HepG2 (cell line): ENCODE measurements at regions of chr18 and their contacts with region 1.

Region 1: GRCh38 chr18:70221156-70221914 is 15.8 kb upstream of the RTTN start:
- DNase-seq: no peak
- ATAC-seq: peak; percentile 65
- H3K4me3 ChIP-seq: no peak overlapping the region
- H3K27ac ChIP-seq: no peak overlapping the region
- H3K4me1 ChIP-seq: peaks cover 15% of the 10 kb centered on the region
- H3K27me3 ChIP-seq: peaks cover 0 to 29% of the 10 kb centered on the region in 2 experiments; a peak in 3 of 5 replicates
- CTCF ChIP-seq: no peak
- EP300 ChIP-seq: no peak
- POLR2A ChIP-seq: no peak
- RAD21 ChIP-seq: no peak

Region 2: GRCh38 chr18:70116949-70117348 is 104.4 kb before region 1 on chr18:
- CTCF ChIA-PET with region 1: no interaction called
- POLR2A ChIA-PET with region 1: no interaction called
- in situ Hi-C with region 1: no loop called
- intact Hi-C with region 1: no loop called
- DNase-seq: no peak
- ATAC-seq: no peak
- H3K4me3 ChIP-seq: no peak overlapping the region
- H3K27ac ChIP-seq: no peak overlapping the region
- H3K4me1 ChIP-seq: no peaks in the 10 kb centered on the region
- H3K27me3 ChIP-seq: no peaks in the 10 kb centered on the region
- CTCF ChIP-seq: no peak
- EP300 ChIP-seq: no peak
- POLR2A ChIP-seq: no peak
- RAD21 ChIP-seq: no peak

Region 3: GRCh38 chr18:70249118-70249517 is 27.8 kb after region 1 on chr18:
- CTCF ChIA-PET with region 1: no interaction called
- POLR2A ChIA-PET with region 1: no interaction called
- in situ Hi-C with region 1: no loop called
- intact Hi-C with region 1: loop called (anchors 1 kb)
- DNase-seq: no peak
- ATAC-seq: no peak
- H3K4me3 ChIP-seq: no peak overlapping the region
- H3K27ac ChIP-seq: no peak overlapping the region
- H3K4me1 ChIP-seq: no peaks in the 10 kb centered on the region
- H3K27me3 ChIP-seq: no peaks in the 10 kb centered on the region
- CTCF ChIP-seq: no peak
- EP300 ChIP-seq: no peak
- POLR2A ChIP-seq: no peak
- RAD21 ChIP-seq: no peak

Region 4: DNA sequence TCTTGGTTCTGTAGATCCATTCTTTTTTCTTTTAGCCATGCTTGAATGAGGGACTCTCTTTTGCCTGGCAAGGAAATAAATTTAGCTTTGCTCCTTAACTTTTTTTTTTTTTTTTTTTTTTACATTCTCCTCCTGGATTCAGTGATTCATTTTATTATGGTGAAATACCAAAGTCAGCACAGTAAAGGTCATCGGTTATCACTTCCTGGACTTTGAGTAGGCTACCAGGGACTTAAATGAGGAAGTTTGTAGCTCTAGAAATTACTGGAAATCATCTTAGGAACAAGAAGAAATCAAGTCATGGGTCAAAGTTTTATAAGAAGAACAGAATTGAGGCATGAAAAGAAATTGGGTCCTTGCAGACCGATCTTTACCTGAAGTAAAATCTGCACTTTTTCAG is 142.5 kb after region 1 on chr18:
- CTCF ChIA-PET with region 1: no interaction called
- POLR2A ChIA-PET with region 1: no interaction called
- in situ Hi-C with region 1: no loop called
- intact Hi-C with region 1: no loop called
- DNase-seq: peak; percentile 48
- ATAC-seq: no peak
- H3K4me3 ChIP-seq: no peak overlapping the region
- H3K27ac ChIP-seq: peak overlapping the region; percentile 5
- H3K4me1 ChIP-seq: peaks cover 56% of the 10 kb centered on the region
- H3K27me3 ChIP-seq: no peaks in the 10 kb centered on the region
- CTCF ChIP-seq: no peak
- EP300 ChIP-seq: no peak
- POLR2A ChIP-seq: no peak
- RAD21 ChIP-seq: no peak